PC-3 (cell line): ENCODE measurements at regions of chr20 and their contacts with region 1.

Region 1: GRCh38 chr20:15759594-15759993 is 813.7 kb downstream of the KIF16B start:
- DNase-seq: peak; percentile 31
- ATAC-seq: peak; percentile 23; the same call in 1 of the 2 replicates
- H3K4me3 ChIP-seq: no peak overlapping the region
- H3K27ac ChIP-seq: no peak overlapping the region
- H3K4me1 ChIP-seq: peaks cover 18% of the 10 kb centered on the region
- H3K27me3 ChIP-seq: no peaks in the 10 kb centered on the region
- CTCF ChIP-seq: peak; percentile 26; the same call in 1 of the 2 replicates

Region 2: GRCh38 chr20:15703171-15703911 is 56.3 kb before region 1 on chr20:
- CTCF ChIA-PET with region 1: no interaction called
- POLR2A ChIA-PET with region 1: no interaction called
- intact Hi-C with region 1: loop called (anchors 5 kb)
- DNase-seq: peak; percentile 99
- ATAC-seq: peak; percentile 98
- H3K4me3 ChIP-seq: no peak overlapping the region
- H3K27ac ChIP-seq: peak overlapping the region; percentile 88
- H3K4me1 ChIP-seq: peaks cover 39% of the 10 kb centered on the region
- H3K27me3 ChIP-seq: no peaks in the 10 kb centered on the region
- CTCF ChIP-seq: no peak

Region 3: DNA sequence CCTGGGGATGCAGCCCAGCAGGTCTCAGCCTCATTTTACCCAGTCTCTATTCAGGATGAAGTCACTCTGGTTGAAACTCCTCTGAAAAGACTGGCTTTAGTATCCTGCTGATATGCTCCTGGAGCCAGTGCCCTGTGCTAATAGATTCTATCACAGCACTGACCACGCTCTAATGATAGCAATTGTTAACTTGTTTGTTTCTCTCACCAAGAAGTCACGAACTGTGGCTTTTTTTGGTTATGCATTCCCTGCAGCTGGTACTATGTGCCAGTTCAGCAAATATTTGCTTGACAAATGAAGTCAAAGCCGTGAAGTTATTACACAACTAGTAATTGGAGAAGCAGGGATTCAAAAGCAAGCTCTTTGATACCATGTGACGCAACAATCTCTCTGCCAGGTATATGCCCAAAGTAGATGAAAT is 59.1 kb after region 1 on chr20:
- CTCF ChIA-PET with region 1: no interaction called
- POLR2A ChIA-PET with region 1: no interaction called
- intact Hi-C with region 1: loop called (anchors 2 kb)
- DNase-seq: peak; percentile 86
- ATAC-seq: peak; percentile 47
- H3K4me3 ChIP-seq: no peak overlapping the region
- H3K27ac ChIP-seq: peak overlapping the region; percentile 60
- H3K4me1 ChIP-seq: peaks cover 31% of the 10 kb centered on the region
- H3K27me3 ChIP-seq: no peaks in the 10 kb centered on the region
- CTCF ChIP-seq: no peak